A673 (cell line): ENCODE measurements at regions of chr20 and their contacts with region 1.

Region 1: DNA sequence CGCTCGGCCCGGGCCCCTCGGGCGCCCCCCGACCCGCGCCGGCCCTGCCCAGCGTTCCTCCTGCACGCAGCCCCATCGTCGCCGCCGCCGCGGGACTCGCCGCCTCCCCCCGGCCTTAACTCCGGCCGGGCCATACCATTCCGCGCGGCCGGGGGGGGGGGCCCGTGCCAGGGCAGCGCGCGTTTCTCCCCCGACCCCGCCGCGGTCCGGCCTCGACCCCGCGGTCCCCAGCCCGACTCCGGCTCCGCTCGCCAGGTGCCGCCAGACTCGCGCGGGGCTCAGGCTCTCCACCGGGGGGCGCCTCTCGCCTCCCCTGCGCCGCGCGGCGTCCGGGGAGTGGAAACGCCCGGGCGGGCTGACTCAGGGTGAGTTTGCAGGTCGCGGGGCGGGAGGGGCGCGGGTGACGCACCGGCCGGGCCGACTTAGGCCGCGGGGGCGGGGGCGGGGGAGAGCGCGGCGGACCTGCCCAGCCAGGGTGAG is at the start of gene SRXN1:
- DNase-seq: peak; percentile 80
- H3K4me3 ChIP-seq: peak within 1 kb of the TSS; percentile 66
- H3K27ac ChIP-seq: peak within 1 kb of the TSS; percentile 81
- H3K4me1 ChIP-seq: peaks cover 6% of the 10 kb centered on the region
- H3K27me3 ChIP-seq: peaks cover 10% of the 10 kb centered on the region
- CTCF ChIP-seq: peak; percentile 59
- total RNA-seq, gene SRXN1: 11.5 and 11.9 TPM in 2 replicates

Region 2: GRCh38 chr20:454946-455345 is 198.2 kb before region 1 on chr20:
- CTCF ChIA-PET with region 1: no interaction called
- POLR2A ChIA-PET with region 1: no interaction called
- intact Hi-C with region 1: no loop called
- DNase-seq: no peak
- H3K4me3 ChIP-seq: no peak overlapping the region
- H3K27ac ChIP-seq: no peak overlapping the region
- H3K4me1 ChIP-seq: peaks cover 4% of the 10 kb centered on the region
- H3K27me3 ChIP-seq: no peaks in the 10 kb centered on the region
- CTCF ChIP-seq: no peak

Region 3: GRCh38 chr20:517221-517620 is 135.9 kb before region 1 on chr20:
- CTCF ChIA-PET with region 1: no interaction called
- POLR2A ChIA-PET with region 1: no interaction called
- intact Hi-C with region 1: no loop called
- DNase-seq: no peak
- H3K4me3 ChIP-seq: no peak overlapping the region
- H3K27ac ChIP-seq: no peak overlapping the region
- H3K4me1 ChIP-seq: no peaks in the 10 kb centered on the region
- H3K27me3 ChIP-seq: no peaks in the 10 kb centered on the region
- CTCF ChIP-seq: no peak

Region 4: GRCh38 chr20:610130-611046 is 42.8 kb before region 1 on chr20 and contains the start of gene TCF15:
- CTCF ChIA-PET with region 1: no interaction called
- POLR2A ChIA-PET with region 1: no interaction called
- intact Hi-C with region 1: no loop called
- DNase-seq: peak; percentile 45
- H3K4me3 ChIP-seq: no peak within 1 kb of the TSS
- H3K27ac ChIP-seq: no peak within 1 kb of the TSS
- H3K4me1 ChIP-seq: peaks cover 6% of the 10 kb centered on the region
- H3K27me3 ChIP-seq: peaks cover 65% of the 10 kb centered on the region
- CTCF ChIP-seq: no peak
- total RNA-seq, gene TCF15: 0.20 and 0.24 TPM in 2 replicates

Region 5: GRCh38 chr20:728248-728944 is 75.2 kb after region 1 on chr20:
- CTCF ChIA-PET with region 1: no interaction called
- POLR2A ChIA-PET with region 1: no interaction called
- intact Hi-C with region 1: loop called (anchors 5 kb)
- DNase-seq: peak; percentile 69
- H3K4me3 ChIP-seq: peak overlapping the region; percentile 58
- H3K27ac ChIP-seq: no peak overlapping the region
- H3K4me1 ChIP-seq: no peaks in the 10 kb centered on the region
- H3K27me3 ChIP-seq: peaks cover 18% of the 10 kb centered on the region
- CTCF ChIP-seq: peak; percentile 77